Dorsolateral prefrontal cortex (tissue), 120 donors: ENCODE measurements at regions of chr5 and their contacts with region 1.

Region 1: GRCh38 chr5:43061352-43062075 is 21.4 kb upstream of the ANXA2R start:
- DNase-seq: no peak
- H3K4me3 ChIP-seq: no peak overlapping the region
- H3K27ac ChIP-seq: no peak overlapping the region
- H3K27me3 ChIP-seq: no peaks in the 10 kb centered on the region
- CTCF ChIP-seq: no peak

Region 2: GRCh38 chr5:42756606-42757601 is 304.6 kb before region 1 on chr5 and contains the start of gene CCDC152:
- intact Hi-C with region 1: no loop called
- DNase-seq: peak in 8 of 10 donors; percentile 9 to 46 (median 36)
- H3K4me3 ChIP-seq: peak within 1 kb of the TSS; percentile 6 to 71 (median 51)
- H3K27ac ChIP-seq: no peak within 1 kb of the TSS
- H3K27me3 ChIP-seq: peaks cover 0 to 9% (median 0%) of the 10 kb centered on the region in 45 donors
- CTCF ChIP-seq: no peak
- total RNA-seq, gene CCDC152: 1.1 to 7.3 (median 3.8) TPM

Region 3: GRCh38 chr5:43046474-43046873 is 15.0 kb before region 1 on chr5:
- intact Hi-C with region 1: loop called (anchors 1 kb)
- DNase-seq: no peak
- H3K4me3 ChIP-seq: no peak overlapping the region
- H3K27ac ChIP-seq: no peak overlapping the region
- H3K27me3 ChIP-seq: peaks cover 0 to 23% (median 11%) of the 10 kb centered on the region in 45 donors
- CTCF ChIP-seq: no peak